Aorta (tissue), 5 donors: ENCODE measurements at regions of chr19 and their contacts with region 1.

Region 1: GRCh38 chr19:14147797-14148605 is 11.6 kb upstream of the ASF1B start:
- DNase-seq: peak; percentile 79 to 90
- ATAC-seq: peak; percentile 90
- H3K4me3 ChIP-seq: no peak overlapping the region
- H3K27ac ChIP-seq: no peak overlapping the region
- H3K4me1 ChIP-seq: no peaks in the 10 kb centered on the region
- H3K27me3 ChIP-seq: no peaks in the 10 kb centered on the region

Region 2: DNA sequence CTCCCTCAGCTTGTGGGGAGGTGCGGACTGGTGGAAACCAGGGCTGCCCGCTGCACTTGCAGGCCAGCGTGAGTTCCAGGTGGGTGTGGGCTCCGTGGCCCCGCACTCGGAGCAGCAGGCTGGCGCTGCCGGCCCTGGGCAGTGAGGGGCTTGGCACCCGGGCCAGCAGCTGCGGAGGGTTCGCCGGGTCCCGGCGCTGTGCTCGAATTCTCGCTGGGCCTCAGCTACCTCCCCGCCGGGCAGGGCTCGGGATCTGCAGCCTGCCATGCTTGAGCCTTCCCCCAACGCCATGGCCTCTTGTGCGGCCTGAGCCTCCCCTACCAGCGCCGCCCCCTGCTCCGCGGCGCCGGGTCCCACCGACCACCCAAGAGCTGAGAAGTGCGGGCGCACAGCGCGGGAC is 129.6 kb after region 1 on chr19:
- intact Hi-C with region 1: loop called in 1 of 2 experiments (anchors 10 kb)
- DNase-seq: no peak
- ATAC-seq: no peak
- H3K4me3 ChIP-seq: no peak overlapping the region
- H3K27ac ChIP-seq: no peak overlapping the region
- H3K4me1 ChIP-seq: no peaks in the 10 kb centered on the region
- H3K27me3 ChIP-seq: no peaks in the 10 kb centered on the region

Region 3: DNA sequence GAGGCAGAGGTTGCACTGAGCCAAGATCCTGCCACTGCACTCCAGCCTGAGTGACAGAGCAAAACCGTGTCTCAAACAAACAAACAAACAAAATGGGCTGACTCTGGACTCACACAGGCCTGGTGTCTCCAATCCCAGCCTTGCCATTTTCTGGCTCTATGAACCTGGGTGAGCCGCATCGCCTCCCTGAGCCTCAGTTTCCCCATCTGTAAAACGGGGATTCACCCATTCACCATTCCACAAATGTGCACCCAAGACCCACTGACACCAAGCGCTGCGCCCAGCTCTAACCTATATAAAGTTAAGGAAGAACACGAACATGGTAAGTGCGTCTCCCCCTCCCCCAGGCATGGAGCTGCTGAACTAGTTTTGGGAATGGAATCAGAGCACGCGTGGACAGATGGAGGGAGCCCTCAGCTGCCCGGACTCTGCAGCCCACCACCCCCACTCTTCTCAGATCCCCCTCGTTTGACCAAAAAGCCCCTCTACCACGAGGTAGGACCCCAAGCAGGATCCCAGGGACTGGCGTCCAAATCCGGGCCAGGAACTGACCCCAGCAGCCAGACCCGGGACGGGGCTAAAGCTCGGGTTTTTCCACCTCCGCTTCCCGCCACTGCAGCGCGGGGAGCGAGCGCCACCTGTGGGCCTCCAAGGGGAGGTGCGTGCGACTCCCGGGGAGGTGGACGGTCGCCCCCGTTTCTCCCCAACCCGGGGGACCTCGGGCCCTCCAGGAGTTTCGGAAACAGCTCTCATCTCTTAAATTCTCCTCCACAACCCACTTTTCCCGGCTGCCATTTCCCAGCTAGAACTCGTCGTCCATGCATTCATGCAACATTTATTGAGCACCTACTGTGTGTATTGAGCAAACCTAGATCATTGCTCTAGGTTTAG is 200.2 kb after region 1 on chr19:
- intact Hi-C with region 1: loop called in 1 of 2 experiments (anchors 2 kb)
- DNase-seq: peak; percentile 79 to 90
- ATAC-seq: peak; percentile 90
- H3K4me3 ChIP-seq: no peak overlapping the region
- H3K27ac ChIP-seq: no peak overlapping the region
- H3K4me1 ChIP-seq: no peaks in the 10 kb centered on the region
- H3K27me3 ChIP-seq: no peaks in the 10 kb centered on the region